ENCODE measurements at regions of chr17 and their contacts with region 1.

Region 1: GRCh38 chr17:75430159-75430974 is 24.9 kb upstream of the GRB2 start:
- DNase-seq: no peak
- ATAC-seq: no peak
- H3K4me3 ChIP-seq: no peak overlapping the region
- H3K27ac ChIP-seq: no peak overlapping the region
- H3K4me1 ChIP-seq: peaks cover 9% of the 10 kb centered on the region
- H3K27me3 ChIP-seq: no peaks in the 10 kb centered on the region; a peak in 1 of 4 replicates
- CTCF ChIP-seq: no peak
- EP300 ChIP-seq: no peak
- POLR2A ChIP-seq: no peak
- RAD21 ChIP-seq: no peak

Region 2: GRCh38 chr17:75456417-75457046 is 26.2 kb after region 1 on chr17 and contains the start of gene TMEM94:
- CTCF ChIA-PET with region 1: interaction called, 8 read pairs
- POLR2A ChIA-PET with region 1: interaction called, 5 read pairs
- RAD21 ChIA-PET with region 1: interaction called, 4 read pairs
- SMC1A ChIA-PET with region 1: interaction called, 19 read pairs
- in situ Hi-C with region 1: no loop called
- intact Hi-C with region 1: no loop called
- DNase-seq: peak; percentile 92
- ATAC-seq: peak; percentile 91
- H3K4me3 ChIP-seq: peak within 1 kb of the TSS; percentile 86
- H3K27ac ChIP-seq: peak within 1 kb of the TSS; percentile 84
- H3K4me1 ChIP-seq: peaks cover 41% of the 10 kb centered on the region
- H3K27me3 ChIP-seq: no peaks in the 10 kb centered on the region
- CTCF ChIP-seq: no peak
- EP300 ChIP-seq: no peak
- POLR2A ChIP-seq: peak; percentile 72
- RAD21 ChIP-seq: no peak
- polyA plus RNA-seq, gene TMEM94: 0.31 to 2.3 TPM

Region 3: DNA sequence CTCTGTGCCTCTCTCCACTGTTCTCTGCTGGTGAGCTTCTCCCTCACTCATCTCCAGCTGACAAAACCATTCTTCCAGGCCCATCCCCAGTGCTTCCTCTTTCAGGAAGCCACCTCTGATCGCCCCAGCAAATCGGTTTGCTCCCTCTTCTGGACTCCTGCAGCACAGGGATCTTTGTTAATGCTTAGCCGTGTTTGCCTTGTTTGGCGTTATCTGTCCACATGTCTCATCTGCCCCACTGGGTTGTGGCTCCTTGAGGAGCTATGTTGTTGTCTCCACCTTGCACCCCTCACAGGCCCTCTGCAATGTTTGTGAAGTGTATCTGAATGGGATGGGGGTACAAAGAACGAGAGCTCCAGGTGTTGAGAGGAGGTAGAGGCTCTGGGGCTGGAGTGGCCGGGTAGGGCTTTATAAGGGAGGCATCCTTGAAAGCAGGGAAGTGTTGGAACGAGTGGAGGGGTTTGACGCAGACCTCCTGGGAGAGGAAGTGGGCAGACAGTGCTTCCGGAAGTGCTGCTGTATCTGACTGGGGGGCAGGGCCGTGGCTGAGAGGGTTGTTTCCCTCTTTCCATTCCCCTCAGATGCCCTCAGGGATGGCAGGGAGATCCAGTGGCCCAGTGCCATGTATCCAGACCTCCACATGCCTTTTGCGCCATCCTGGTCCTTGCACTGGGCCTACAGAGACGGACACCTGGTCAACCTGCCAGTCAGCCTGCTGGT is 57.1 kb after region 1 on chr17:
- CTCF ChIA-PET with region 1: interaction called, 3 read pairs
- POLR2A ChIA-PET with region 1: no interaction called
- RAD21 ChIA-PET with region 1: interaction called, 5 read pairs
- SMC1A ChIA-PET with region 1: interaction called, 8 read pairs
- in situ Hi-C with region 1: no loop called
- intact Hi-C with region 1: loop called (anchors 2 kb)
- DNase-seq: no peak
- ATAC-seq: peak; percentile 81
- H3K4me3 ChIP-seq: no peak overlapping the region
- H3K27ac ChIP-seq: peak overlapping the region; percentile 68
- H3K4me1 ChIP-seq: peaks cover 13% of the 10 kb centered on the region
- H3K27me3 ChIP-seq: no peaks in the 10 kb centered on the region
- CTCF ChIP-seq: peak in 2 of 3 experiments; percentile 9 to 22; a peak in 2 of 6 replicates
- EP300 ChIP-seq: no peak
- POLR2A ChIP-seq: peak; percentile 58; the same call in 1 of the 2 replicates
- RAD21 ChIP-seq: 0 out of 2 replicates have a peak, but pooled peaks have one; percentile 8

Region 4: DNA sequence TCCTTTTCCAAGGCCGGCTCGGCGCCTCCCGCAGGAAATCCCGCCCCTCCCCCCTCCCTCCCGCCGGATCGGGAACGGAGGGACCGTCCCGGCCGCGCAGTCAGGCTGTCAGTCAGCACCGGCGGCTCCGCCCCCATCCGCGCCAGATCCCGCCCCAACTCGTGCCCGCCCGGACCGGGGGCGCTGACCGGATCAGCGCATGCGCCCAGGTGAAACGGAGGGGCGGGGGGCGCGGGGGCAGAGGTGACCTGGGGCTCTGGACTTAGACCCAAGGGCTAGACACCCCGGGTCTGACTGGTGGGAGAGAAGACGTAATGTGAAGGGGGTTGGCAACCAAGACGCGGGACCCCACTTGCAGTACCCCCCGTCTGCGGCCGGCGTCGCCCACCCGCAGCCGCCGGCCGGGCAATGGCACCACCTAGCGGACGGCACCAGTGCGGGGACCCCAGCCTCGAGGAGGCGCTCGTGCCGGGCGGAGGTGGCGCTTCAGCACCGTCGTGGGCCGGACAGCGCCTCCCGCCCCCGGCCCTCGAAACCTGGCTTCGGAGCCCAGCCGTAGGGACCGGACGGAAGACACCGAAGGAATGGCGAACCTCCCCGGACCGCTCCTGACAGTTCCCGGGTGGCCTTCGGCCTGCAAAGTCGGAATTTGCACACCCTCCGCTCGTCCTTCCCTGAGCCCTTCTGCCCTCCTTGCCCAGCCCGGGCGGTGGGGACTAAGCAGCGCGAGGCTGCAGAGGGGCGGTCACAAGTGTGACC is 85.3 kb after region 1 on chr17 and contains the start of gene CASKIN2:
- CTCF ChIA-PET with region 1: interaction called, 21 read pairs
- POLR2A ChIA-PET with region 1: interaction called, 3 read pairs
- RAD21 ChIA-PET with region 1: interaction called, 8 read pairs
- SMC1A ChIA-PET with region 1: interaction called, 10 read pairs
- in situ Hi-C with region 1: no loop called
- intact Hi-C with region 1: loop called (anchors 1 kb)
- DNase-seq: peak; percentile 30
- ATAC-seq: peak; percentile 71
- H3K4me3 ChIP-seq: peak within 1 kb of the TSS; percentile 90
- H3K27ac ChIP-seq: peak within 1 kb of the TSS; percentile 10; the same call in 1 of the 2 replicates
- H3K4me1 ChIP-seq: peaks cover 20% of the 10 kb centered on the region
- H3K27me3 ChIP-seq: no peaks in the 10 kb centered on the region
- CTCF ChIP-seq: peak; percentile 95 to 99 (median 95)
- EP300 ChIP-seq: no peak
- POLR2A ChIP-seq: no peak
- RAD21 ChIP-seq: peak; percentile 65
- polyA plus RNA-seq, gene CASKIN2: 0.02 TPM in 1 of 2 experiments, not detected in the other

Region 5: GRCh38 chr17:75589012-75589918 is 158.9 kb after region 1 on chr17:
- CTCF ChIA-PET with region 1: interaction called, 10 read pairs
- POLR2A ChIA-PET with region 1: no interaction called
- RAD21 ChIA-PET with region 1: no interaction called
- SMC1A ChIA-PET with region 1: no interaction called
- in situ Hi-C with region 1: loop called (anchors 10 kb)
- intact Hi-C with region 1: loop called (anchors 1 kb)
- DNase-seq: peak; percentile 48
- ATAC-seq: peak; percentile 90
- H3K4me3 ChIP-seq: peak overlapping the region; percentile 69
- H3K27ac ChIP-seq: peak overlapping the region; percentile 33; the same call in 1 of the 2 replicates
- H3K4me1 ChIP-seq: 0 out of 2 replicates have a peak, but pooled peaks cover 4% of the 10 kb centered on the region
- H3K27me3 ChIP-seq: peaks cover 5 to 9% of the 10 kb centered on the region in 2 experiments
- CTCF ChIP-seq: peak; percentile 46 to 66 (median 65)
- EP300 ChIP-seq: no peak
- POLR2A ChIP-seq: peak; percentile 73
- RAD21 ChIP-seq: peak; percentile 44

Region 6: DNA sequence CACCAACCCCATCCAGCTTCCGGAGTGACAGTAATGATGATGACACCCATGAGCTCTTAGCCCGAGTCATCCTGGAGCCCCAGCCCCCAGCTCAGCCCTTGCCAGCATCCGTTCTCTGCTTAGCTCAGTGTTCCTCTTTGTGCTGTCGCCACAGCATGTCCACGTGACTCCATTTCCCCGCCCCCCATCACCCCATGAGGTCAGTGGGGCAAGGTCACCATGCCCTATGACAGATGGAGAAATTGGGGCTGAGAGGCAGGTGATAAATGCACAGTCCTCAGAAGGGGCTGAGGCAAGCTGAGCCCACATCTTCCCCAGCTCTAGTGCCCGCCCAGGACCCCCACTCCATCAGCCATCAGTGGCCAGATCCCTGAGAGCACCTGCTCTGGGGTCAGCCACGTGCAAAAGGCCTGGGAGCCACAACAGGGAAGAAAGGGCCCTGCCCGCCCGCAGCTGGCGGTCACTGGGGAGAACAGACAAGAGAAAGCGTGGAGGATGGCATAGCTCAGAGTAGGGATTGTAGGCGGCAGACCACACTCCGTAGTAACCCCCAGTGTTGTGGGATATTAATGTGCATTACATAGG is 307.9 kb after region 1 on chr17:
- CTCF ChIA-PET with region 1: no interaction called
- POLR2A ChIA-PET with region 1: no interaction called
- RAD21 ChIA-PET with region 1: no interaction called
- SMC1A ChIA-PET with region 1: no interaction called
- in situ Hi-C with region 1: loop called (anchors 5 kb)
- intact Hi-C with region 1: no loop called
- DNase-seq: no peak
- ATAC-seq: peak; percentile 80
- H3K4me3 ChIP-seq: no peak overlapping the region
- H3K27ac ChIP-seq: no peak overlapping the region
- H3K4me1 ChIP-seq: peaks cover 7% of the 10 kb centered on the region
- H3K27me3 ChIP-seq: no peaks in the 10 kb centered on the region
- CTCF ChIP-seq: no peak
- EP300 ChIP-seq: no peak
- POLR2A ChIP-seq: no peak
- RAD21 ChIP-seq: no peak

Measured in GM12878 (cell line).